H1 (cell line): ENCODE measurements at regions of chr4 and their contacts with region 1.

Region 1: DNA sequence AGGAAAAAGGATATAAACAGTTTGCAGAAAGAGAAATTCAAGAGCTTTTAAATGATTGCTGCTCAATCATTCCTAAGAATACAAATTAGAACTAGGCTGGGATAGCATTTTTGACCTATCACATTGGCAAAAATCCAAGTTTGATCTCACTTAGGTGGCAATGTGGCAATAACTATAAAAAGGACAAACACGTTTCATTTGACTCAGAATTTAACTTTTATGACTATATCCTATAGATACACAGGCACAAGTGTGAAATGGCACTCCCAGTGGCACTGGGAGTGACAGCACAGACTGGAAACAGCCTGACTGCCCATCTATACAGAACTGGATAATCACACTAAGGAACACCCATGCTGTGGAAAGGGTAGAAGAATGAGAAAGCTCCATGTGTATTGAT is 11.1 kb downstream of the CENPU start:
- DNase-seq: no peak
- H3K4me3 ChIP-seq: no peak overlapping the region
- H3K27ac ChIP-seq: no peak overlapping the region
- H3K4me1 ChIP-seq: no peaks in the 10 kb centered on the region
- H3K27me3 ChIP-seq: no peaks in the 10 kb centered on the region
- CTCF ChIP-seq: peak in 1 of 3 experiments; percentile 11; a peak in 1 of 4 replicates
- EP300 ChIP-seq: no peak
- POLR2A ChIP-seq: no peak
- RAD21 ChIP-seq: 0 out of 4 replicates have a peak, but pooled peaks of 1 of the 2 experiments have one; percentile 13

Region 2: GRCh38 chr4:184733654-184734524 is 11.1 kb after region 1 on chr4 and contains the start of gene CENPU:
- CTCF ChIA-PET with region 1: interaction called, 5 read pairs
- POLR2A ChIA-PET with region 1: interaction called, 20 read pairs
- DNase-seq: peak; percentile 97 to 99
- H3K4me3 ChIP-seq: peak within 1 kb of the TSS; percentile 92 to 99 (median 98)
- H3K27ac ChIP-seq: peak within 1 kb of the TSS; percentile 93
- H3K4me1 ChIP-seq: peaks cover 0 to 8% (median 3%) of the 10 kb centered on the region in 4 experiments; a peak in 4 of 7 replicates
- H3K27me3 ChIP-seq: no peaks in the 10 kb centered on the region
- CTCF ChIP-seq: no peak
- EP300 ChIP-seq: peak in 1 of 2 experiments; percentile 88; a peak in 1 of 3 replicates
- POLR2A ChIP-seq: peak; percentile 80 to 82
- RAD21 ChIP-seq: peak in 1 of 2 experiments; percentile 7; a peak in 1 of 4 replicates
- total RNA-seq, gene CENPU: 122 and 124 TPM in 2 replicates